ENCODE measurements at regions of chr1 and their contacts with region 1.

Region 1: GRCh38 chr1:94417978-94418663 is at the start of gene ABCD3:
- DNase-seq: peak; percentile 96
- H3K4me3 Mint-ChIP-seq: peak within 1 kb of the TSS; percentile 93
- H3K27ac Mint-ChIP-seq: peak within 1 kb of the TSS; percentile 69
- H3K4me1 Mint-ChIP-seq: peaks cover 35% of the 10 kb centered on the region
- H3K27me3 Mint-ChIP-seq: peaks cover 5% of the 10 kb centered on the region
- total RNA-seq, gene ABCD3: 61.4 and 63.5 TPM in 2 replicates

Region 2: GRCh38 chr1:94237291-94238226 is 180.6 kb before region 1 on chr1 and contains the start of gene ARHGAP29:
- intact Hi-C with region 1: loop called (anchors 2 kb)
- DNase-seq: peak; percentile 40
- H3K4me3 Mint-ChIP-seq: peak within 1 kb of the TSS; percentile 62
- H3K27ac Mint-ChIP-seq: no peak within 1 kb of the TSS
- H3K4me1 Mint-ChIP-seq: peaks cover 15% of the 10 kb centered on the region
- H3K27me3 Mint-ChIP-seq: peaks cover 77% of the 10 kb centered on the region
- total RNA-seq, gene ARHGAP29: 0.05 and 0.18 TPM in 2 replicates

Region 3: GRCh38 chr1:94342405-94342804 is 75.7 kb before region 1 on chr1:
- intact Hi-C with region 1: loop called (anchors 5 kb)
- DNase-seq: no peak
- H3K4me3 Mint-ChIP-seq: no peak overlapping the region
- H3K27ac Mint-ChIP-seq: no peak overlapping the region
- H3K4me1 Mint-ChIP-seq: no peaks in the 10 kb centered on the region
- H3K27me3 Mint-ChIP-seq: no peaks in the 10 kb centered on the region

Region 4: GRCh38 chr1:94384485-94385265 is 33.4 kb before region 1 on chr1:
- intact Hi-C with region 1: loop called (anchors 1 kb)
- DNase-seq: peak; percentile 13
- H3K4me3 Mint-ChIP-seq: peak overlapping the region; percentile 61
- H3K27ac Mint-ChIP-seq: peak overlapping the region; percentile 95
- H3K4me1 Mint-ChIP-seq: peaks cover 49% of the 10 kb centered on the region
- H3K27me3 Mint-ChIP-seq: no peaks in the 10 kb centered on the region

Region 5: GRCh38 chr1:94541175-94542087 is 123.3 kb after region 1 on chr1 and contains the start of gene F3:
- intact Hi-C with region 1: loop called (anchors 10 kb)
- DNase-seq: peak; percentile 63
- H3K4me3 Mint-ChIP-seq: peak within 1 kb of the TSS; percentile 83
- H3K27ac Mint-ChIP-seq: peak within 1 kb of the TSS; percentile 60
- H3K4me1 Mint-ChIP-seq: peaks cover 21% of the 10 kb centered on the region
- H3K27me3 Mint-ChIP-seq: peaks cover 70% of the 10 kb centered on the region
- total RNA-seq, gene F3: 0.74 and 1.0 TPM in 2 replicates

Region 6: DNA sequence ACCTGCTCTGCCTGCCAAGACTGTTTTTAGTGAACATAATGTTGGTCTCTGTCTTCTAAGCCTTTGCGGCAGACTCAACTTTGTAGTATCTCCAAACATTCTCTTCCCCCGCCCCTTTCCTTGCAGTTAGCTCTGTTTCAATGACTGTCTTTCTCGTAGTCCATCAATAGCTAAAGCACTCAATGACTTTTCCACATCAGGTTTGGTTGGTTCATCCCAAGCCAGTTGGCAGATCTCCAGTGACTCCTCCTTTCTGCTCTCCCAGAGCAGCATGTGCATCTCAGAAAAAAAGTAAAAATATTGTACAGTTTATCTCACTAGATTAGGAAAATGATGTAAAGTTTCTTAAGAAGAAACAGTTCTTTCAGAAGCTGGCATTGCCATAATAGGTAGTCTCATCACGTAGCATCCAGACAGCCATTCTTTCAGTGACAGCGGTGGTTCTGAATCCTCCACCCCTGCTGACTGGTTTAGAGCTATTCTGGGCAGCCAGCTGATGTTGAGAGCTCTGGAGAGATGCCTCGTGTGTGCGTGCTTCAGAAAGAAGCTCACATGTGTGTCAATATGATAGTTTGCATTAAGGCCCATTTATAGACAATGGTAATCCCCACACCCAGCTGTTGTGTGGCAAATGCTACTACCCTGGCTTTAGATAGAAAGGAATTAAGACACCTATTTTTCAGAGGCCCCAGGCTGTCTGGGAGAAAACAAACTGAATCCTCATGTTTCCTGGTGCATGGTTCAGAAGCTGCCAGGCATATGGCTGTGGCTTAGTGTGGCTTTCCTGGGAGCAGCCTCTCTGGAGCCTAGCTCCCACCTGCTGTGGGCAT is 455.6 kb after region 1 on chr1:
- intact Hi-C with region 1: no loop called
- DNase-seq: no peak
- H3K4me3 Mint-ChIP-seq: no peak overlapping the region
- H3K27ac Mint-ChIP-seq: no peak overlapping the region
- H3K4me1 Mint-ChIP-seq: peaks cover 6% of the 10 kb centered on the region
- H3K27me3 Mint-ChIP-seq: peaks cover 4% of the 10 kb centered on the region

Region 7: GRCh38 chr1:95072532-95073419 is 654.7 kb after region 1 on chr1 and contains the start of gene ALG14:
- intact Hi-C with region 1: loop called (anchors 5 kb)
- DNase-seq: peak; percentile 88
- H3K4me3 Mint-ChIP-seq: peak within 1 kb of the TSS; percentile 98
- H3K27ac Mint-ChIP-seq: peak within 1 kb of the TSS; percentile 95
- H3K4me1 Mint-ChIP-seq: peaks cover 11% of the 10 kb centered on the region
- H3K27me3 Mint-ChIP-seq: no peaks in the 10 kb centered on the region
- total RNA-seq, gene ALG14: 2.4 and 3.1 TPM in 2 replicates

Measured in activated T-helper 2 cell treated with anti-CD3 and anti-CD28 coated beads, Interferon-gamma antibody, Interleukin-2, Interleukin-4, amounts not matched to agents 10 μg/mL and 5 μg/mL and 100 μg/mL, durations not matched to agents 14 hours and 24 hours and 36 hours (primary cell).